Activated T-helper 1 cell treated with anti-CD3 and anti-CD28 coated beads, Interleukin-12 subunit alpha, Interleukin-12 subunit beta, Interleukin-2, Interleukin-4 antibody, amounts not matched to agents 30 ng/mL and 10 ng/mL and 1 ng/mL, durations not matched to agents 14 hours and 24 hours and 36 hours (primary cell): ENCODE measurements at regions of chr14 and their contacts with region 1.

Region 1: DNA sequence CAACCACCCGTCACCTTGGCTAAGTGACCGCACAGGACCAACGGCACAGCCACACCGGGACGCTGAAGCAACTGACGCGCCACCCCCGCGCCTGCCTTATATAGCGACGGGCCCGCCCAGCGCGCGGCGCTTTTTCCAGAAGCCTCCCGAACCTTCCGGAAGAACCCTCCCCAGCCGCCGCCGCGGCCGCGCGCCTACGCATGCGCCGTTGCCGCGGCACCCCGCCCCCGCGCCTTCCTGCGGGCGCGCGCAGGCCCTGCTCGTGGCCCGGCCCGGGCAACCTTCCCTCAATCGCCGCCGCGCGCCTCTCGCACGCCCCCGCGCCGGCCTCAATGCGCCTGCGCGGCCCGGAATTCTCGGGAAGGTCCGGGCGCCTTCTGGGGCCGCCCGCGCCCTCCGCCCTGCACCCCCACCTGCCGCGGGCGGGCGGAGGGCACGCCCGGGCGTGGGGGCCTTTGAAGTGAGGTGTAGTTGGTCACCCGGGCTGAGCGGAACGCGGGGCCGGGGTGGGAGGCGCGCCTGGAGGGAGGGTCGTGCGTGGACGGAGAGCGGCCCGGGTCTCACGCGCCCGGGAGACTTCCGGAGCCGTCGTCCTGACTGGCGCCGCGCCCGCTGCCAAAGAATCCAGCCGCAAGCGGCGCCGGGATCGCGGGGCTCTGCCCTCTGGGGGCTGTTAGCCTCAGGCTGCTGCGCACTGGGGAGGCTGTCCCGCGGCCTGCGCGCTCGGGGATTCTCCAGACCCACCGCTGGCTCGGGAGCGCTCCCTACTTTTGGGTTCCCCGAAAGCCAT is at the start of gene HSP90AA1:
- DNase-seq: peak; percentile 94
- H3K4me3 Mint-ChIP-seq: peak within 1 kb of the TSS; percentile 99
- H3K27ac Mint-ChIP-seq: peak within 1 kb of the TSS; percentile 97
- H3K4me1 Mint-ChIP-seq: peaks cover 63% of the 10 kb centered on the region
- H3K27me3 Mint-ChIP-seq: no peaks in the 10 kb centered on the region
- total RNA-seq, gene HSP90AA1: 993 and 995 TPM in 2 replicates

Region 2: GRCh38 chr14:102182190-102182589 is 95.0 kb after region 1 on chr14:
- intact Hi-C with region 1: loop called (anchors 2 kb)
- DNase-seq: no peak
- H3K4me3 Mint-ChIP-seq: no peak overlapping the region
- H3K27ac Mint-ChIP-seq: peak overlapping the region; percentile 68
- H3K4me1 Mint-ChIP-seq: peaks cover 50% of the 10 kb centered on the region
- H3K27me3 Mint-ChIP-seq: no peaks in the 10 kb centered on the region

Region 3: GRCh38 chr14:102304611-102305509 is 217.7 kb after region 1 on chr14 and contains the start of gene MOK:
- intact Hi-C with region 1: loop called (anchors 1 kb)
- DNase-seq: peak; percentile 98
- H3K4me3 Mint-ChIP-seq: peak within 1 kb of the TSS; percentile 96
- H3K27ac Mint-ChIP-seq: peak within 1 kb of the TSS; percentile 87
- H3K4me1 Mint-ChIP-seq: peaks cover 12% of the 10 kb centered on the region
- H3K27me3 Mint-ChIP-seq: peaks cover 10% of the 10 kb centered on the region
- total RNA-seq, gene MOK: 6.0 and 7.0 TPM in 2 replicates